ENCODE measurements at regions of chr6 and their contacts with region 1.

Region 1: GRCh38 chr6:35522660-35523658 is 10.3 kb upstream of the TULP1 start:
- DNase-seq: peak; percentile 82
- H3K4me3 Mint-ChIP-seq: peak overlapping the region; percentile 58
- H3K27ac Mint-ChIP-seq: peak overlapping the region; percentile 83
- H3K4me1 Mint-ChIP-seq: peaks cover 19% of the 10 kb centered on the region
- H3K27me3 Mint-ChIP-seq: peaks cover 35% of the 10 kb centered on the region

Region 2: DNA sequence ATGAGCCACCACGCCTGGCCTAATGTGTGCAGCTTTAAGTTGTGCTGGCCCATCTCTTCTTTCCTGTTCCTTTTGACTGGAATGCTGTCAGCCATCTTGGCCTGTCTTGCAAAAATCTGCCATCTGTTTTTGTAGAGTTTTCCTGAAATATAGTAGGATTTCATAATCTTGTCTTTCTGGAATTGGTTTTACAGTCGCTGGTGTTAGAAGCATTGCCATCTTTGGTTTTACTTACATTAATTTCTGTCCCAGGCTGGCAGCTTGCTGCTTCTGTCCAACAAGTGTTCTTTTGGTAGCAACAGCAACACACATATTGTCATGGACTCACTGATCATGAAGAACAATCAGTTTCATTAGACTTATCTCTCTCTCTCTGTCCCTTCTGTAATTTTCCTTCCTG is 18.9 kb after region 1 on chr6:
- CTCF ChIA-PET with region 1: interaction called, 10 read pairs
- DNase-seq: no peak
- H3K4me3 Mint-ChIP-seq: no peak overlapping the region
- H3K27ac Mint-ChIP-seq: no peak overlapping the region
- H3K4me1 Mint-ChIP-seq: peaks cover 4% of the 10 kb centered on the region
- H3K27me3 Mint-ChIP-seq: peaks cover 19% of the 10 kb centered on the region

Region 3: GRCh38 chr6:35552285-35552917 is 29.4 kb after region 1 on chr6:
- CTCF ChIA-PET with region 1: interaction called, 17 read pairs
- DNase-seq: peak; percentile 80
- H3K4me3 Mint-ChIP-seq: no peak overlapping the region
- H3K27ac Mint-ChIP-seq: no peak overlapping the region
- H3K4me1 Mint-ChIP-seq: no peaks in the 10 kb centered on the region
- H3K27me3 Mint-ChIP-seq: peaks cover 50% of the 10 kb centered on the region

Measured in activated naive CD4-positive, alpha-beta T cell treated with anti-CD3 and anti-CD28 coated beads, Interleukin-2, amount 10 ng/mL, durations not matched to agents 7 days and 5 days (primary cell).